ENCODE measurements at regions of chr9 and their contacts with region 1.

Region 1: GRCh38 chr9:82781921-82782392 is 281.0 kb downstream of the RASEF start:
- DNase-seq: no peak
- H3K4me3 ChIP-seq: no peak overlapping the region
- H3K27ac ChIP-seq: no peak overlapping the region
- H3K4me1 ChIP-seq: no peaks in the 10 kb centered on the region
- H3K27me3 ChIP-seq: no peaks in the 10 kb centered on the region
- CTCF ChIP-seq: no peak

Region 2: DNA sequence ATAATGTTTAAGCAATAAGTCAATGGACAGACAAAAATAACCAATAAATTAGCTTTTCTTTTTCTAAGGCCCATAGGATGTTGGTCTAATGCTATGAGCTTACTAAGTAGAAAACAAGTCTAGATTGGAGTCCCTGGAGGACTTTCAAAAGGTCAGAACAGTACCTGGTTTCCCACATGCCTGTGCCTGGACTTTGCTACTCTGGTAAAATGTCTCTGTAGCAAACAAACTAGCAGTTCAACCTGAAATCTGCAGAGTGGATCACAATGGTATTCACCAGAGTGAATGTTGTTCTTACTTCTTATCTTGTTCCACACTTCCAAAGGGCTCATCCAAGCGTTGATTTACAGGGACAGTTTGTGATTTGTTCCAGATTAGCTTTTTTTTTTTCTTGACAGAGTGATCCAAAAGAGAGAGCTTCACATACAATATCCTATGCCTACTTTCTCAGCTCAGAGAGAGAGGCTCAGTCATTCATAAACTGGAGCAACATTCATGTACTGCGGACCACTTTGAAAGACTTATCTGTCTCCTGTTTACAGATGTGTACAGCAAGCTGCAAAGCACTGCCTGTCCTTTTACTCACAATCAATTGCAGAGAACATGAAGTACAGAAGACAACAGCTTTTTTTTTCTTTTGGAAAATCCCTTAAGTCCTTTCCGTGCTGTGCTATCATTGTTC is 327.3 kb before region 1 on chr9:
- intact Hi-C with region 1: loop called (anchors 5 kb)
- DNase-seq: no peak
- H3K4me3 ChIP-seq: no peak overlapping the region
- H3K27ac ChIP-seq: no peak overlapping the region
- H3K4me1 ChIP-seq: no peaks in the 10 kb centered on the region
- H3K27me3 ChIP-seq: no peaks in the 10 kb centered on the region
- CTCF ChIP-seq: no peak

Region 3: DNA sequence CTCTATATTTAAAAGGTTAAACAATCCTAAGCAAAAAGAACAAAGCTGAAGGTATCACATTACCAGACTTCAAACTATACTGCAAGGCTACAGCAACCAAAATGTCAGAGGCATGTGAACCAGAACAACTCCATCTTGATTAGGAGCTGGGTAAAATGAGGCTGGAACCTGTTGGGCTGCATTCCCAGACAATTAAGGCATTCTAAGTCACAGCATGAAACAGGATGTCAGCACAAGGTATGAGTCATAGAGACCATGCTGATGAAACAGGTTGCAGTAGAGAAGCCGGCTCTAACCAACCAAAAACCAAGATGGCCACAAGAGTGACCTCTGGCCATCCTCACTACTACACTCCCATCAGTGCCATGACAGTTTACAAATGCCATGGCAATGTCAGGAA is 28.9 kb after region 1 on chr9:
- intact Hi-C with region 1: no loop called
- DNase-seq: no peak
- H3K4me3 ChIP-seq: no peak overlapping the region
- H3K27ac ChIP-seq: no peak overlapping the region
- H3K4me1 ChIP-seq: no peaks in the 10 kb centered on the region
- H3K27me3 ChIP-seq: no peaks in the 10 kb centered on the region
- CTCF ChIP-seq: no peak

Measured in tibial artery (tissue), 4 donors.